Sigmoid colon (tissue), 7 donors: ENCODE measurements at regions of chr14 and their contacts with region 1.

Region 1: GRCh38 chr14:50773632-50774541 is 57.1 kb downstream of the NIN start:
- DNase-seq: no peak
- H3K4me3 ChIP-seq: no peak overlapping the region
- H3K27ac ChIP-seq: peak overlapping the region in 1 of 4 donors; percentile 63
- H3K4me1 ChIP-seq: peaks cover 0 to 12% (median 9%) of the 10 kb centered on the region in 4 donors
- H3K27me3 ChIP-seq: no peaks in the 10 kb centered on the region
- CTCF ChIP-seq: peak in 3 of 4 experiments; percentile 29 to 48 (median 33)
- EP300 ChIP-seq: no peak
- POLR2A ChIP-seq: no peak

Region 2: GRCh38 chr14:50542941-50543418 is 230.9 kb before region 1 on chr14:
- intact Hi-C with region 1: loop called (anchors 5 kb)
- DNase-seq: no peak
- H3K4me3 ChIP-seq: no peak overlapping the region
- H3K27ac ChIP-seq: no peak overlapping the region
- H3K4me1 ChIP-seq: peaks cover 0 to 6% (median 0%) of the 10 kb centered on the region in 4 donors
- H3K27me3 ChIP-seq: no peaks in the 10 kb centered on the region
- CTCF ChIP-seq: peak in 3 of 4 experiments; percentile 19 to 62 (median 61)
- EP300 ChIP-seq: no peak
- POLR2A ChIP-seq: no peak

Region 3: GRCh38 chr14:50599700-50600444 is 174.0 kb before region 1 on chr14:
- intact Hi-C with region 1: loop called (anchors 5 kb)
- DNase-seq: no peak
- H3K4me3 ChIP-seq: no peak overlapping the region
- H3K27ac ChIP-seq: no peak overlapping the region
- H3K4me1 ChIP-seq: no peaks in the 10 kb centered on the region
- H3K27me3 ChIP-seq: no peaks in the 10 kb centered on the region
- CTCF ChIP-seq: peak in 3 of 4 experiments; percentile 25 to 44 (median 33)
- EP300 ChIP-seq: no peak
- POLR2A ChIP-seq: no peak

Region 4: DNA sequence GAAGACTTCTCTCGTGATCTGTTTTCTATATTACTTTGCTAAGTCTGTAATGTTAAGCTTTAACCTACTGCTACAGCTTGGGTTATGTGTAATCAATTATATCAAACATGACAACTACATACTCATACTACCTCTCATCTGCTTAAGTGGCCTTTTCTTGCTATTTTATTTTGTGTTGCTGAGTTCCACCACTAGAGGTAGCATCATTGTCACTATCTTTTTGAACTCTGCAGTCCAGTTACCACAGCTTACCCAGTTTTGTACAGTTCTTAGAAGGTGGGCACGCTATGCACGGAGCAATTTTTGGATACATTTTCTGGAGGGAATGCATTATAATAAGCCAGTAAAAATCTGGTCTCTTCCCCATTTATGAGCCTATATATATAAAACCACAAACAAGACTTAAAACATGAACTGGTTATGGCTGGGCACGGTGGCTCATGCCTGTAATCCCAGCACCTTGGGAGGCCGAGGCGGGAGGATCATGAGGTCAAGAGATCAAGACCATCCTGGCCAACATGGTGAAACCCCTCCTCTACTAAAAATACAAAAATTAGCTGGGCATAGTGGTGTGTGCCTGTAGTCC is 154.2 kb before region 1 on chr14:
- intact Hi-C with region 1: loop called (anchors 5 kb)
- DNase-seq: no peak
- H3K4me3 ChIP-seq: no peak overlapping the region
- H3K27ac ChIP-seq: no peak overlapping the region
- H3K4me1 ChIP-seq: no peaks in the 10 kb centered on the region
- H3K27me3 ChIP-seq: no peaks in the 10 kb centered on the region
- CTCF ChIP-seq: peak in 3 of 4 experiments; percentile 32 to 50 (median 45)
- EP300 ChIP-seq: no peak
- POLR2A ChIP-seq: no peak

Region 5: GRCh38 chr14:50667996-50668825 is 105.7 kb before region 1 on chr14 and contains the start of gene SAV1:
- intact Hi-C with region 1: loop called (anchors 10 kb)
- DNase-seq: peak; percentile 92
- H3K4me3 ChIP-seq: peak within 1 kb of the TSS; percentile 75 to 97 (median 87)
- H3K27ac ChIP-seq: peak within 1 kb of the TSS; percentile 92 to 100 (median 97)
- H3K4me1 ChIP-seq: peaks cover 0 to 26% (median 21%) of the 10 kb centered on the region in 4 donors
- H3K27me3 ChIP-seq: no peaks in the 10 kb centered on the region
- CTCF ChIP-seq: no peak
- EP300 ChIP-seq: peak in 2 of 4 donors; percentile 20 to 21
- POLR2A ChIP-seq: peak; percentile 41 to 64
- total RNA-seq, gene SAV1: 32.0 to 38.2 (median 35.3) TPM